Endothelial cell of umbilical vein (primary cell): ENCODE measurements at regions of chr7 and their contacts with region 1.

Region 1: DNA sequence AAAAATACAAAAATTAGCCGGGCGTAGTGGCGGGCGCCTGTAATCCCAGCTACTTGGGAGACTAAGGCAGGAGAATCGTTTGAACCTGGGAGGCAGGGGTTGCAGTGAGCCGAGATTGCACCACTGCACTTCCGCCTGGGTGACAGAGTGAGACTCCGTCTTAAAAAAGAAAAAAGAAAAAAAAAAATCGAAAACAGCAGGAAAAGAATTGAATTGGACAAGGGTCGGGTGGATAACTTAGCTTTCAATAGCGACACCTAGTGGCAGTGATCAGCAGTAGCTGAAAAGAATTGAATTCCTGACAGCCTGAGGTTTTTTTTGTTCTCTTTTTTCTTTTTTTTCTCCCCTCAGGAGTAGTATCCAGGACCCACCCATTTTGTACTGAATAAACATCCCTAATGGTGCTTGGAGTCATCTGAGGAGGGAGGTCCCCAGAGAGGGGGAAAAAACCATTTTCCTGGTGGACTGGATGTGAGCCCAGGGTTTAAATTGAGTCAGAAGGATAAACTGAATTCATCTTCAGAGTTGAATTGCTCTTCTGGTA is 55.1 kb downstream of the CYCS start:
- DNase-seq: peak; percentile 70
- H3K4me3 ChIP-seq: no peak overlapping the region
- H3K27ac ChIP-seq: no peak overlapping the region
- H3K4me1 ChIP-seq: no peaks in the 10 kb centered on the region
- H3K27me3 ChIP-seq: peaks cover 0 to 2% of the 10 kb centered on the region in 2 experiments
- CTCF ChIP-seq: peak; percentile 65 to 73
- POLR2A ChIP-seq: no peak

Region 2: GRCh38 chr7:24896031-24896501 is 173.9 kb before region 1 on chr7:
- CTCF ChIA-PET with region 1: interaction called, 5 read pairs
- POLR2A ChIA-PET with region 1: no interaction called
- dilution Hi-C with region 1: no loop called
- intact Hi-C with region 1: loop called (anchors 1 kb)
- DNase-seq: no peak
- H3K4me3 ChIP-seq: no peak overlapping the region
- H3K27ac ChIP-seq: no peak overlapping the region
- H3K4me1 ChIP-seq: peaks cover 13% of the 10 kb centered on the region
- H3K27me3 ChIP-seq: no peaks in the 10 kb centered on the region
- CTCF ChIP-seq: no peak
- POLR2A ChIP-seq: no peak

Region 3: DNA sequence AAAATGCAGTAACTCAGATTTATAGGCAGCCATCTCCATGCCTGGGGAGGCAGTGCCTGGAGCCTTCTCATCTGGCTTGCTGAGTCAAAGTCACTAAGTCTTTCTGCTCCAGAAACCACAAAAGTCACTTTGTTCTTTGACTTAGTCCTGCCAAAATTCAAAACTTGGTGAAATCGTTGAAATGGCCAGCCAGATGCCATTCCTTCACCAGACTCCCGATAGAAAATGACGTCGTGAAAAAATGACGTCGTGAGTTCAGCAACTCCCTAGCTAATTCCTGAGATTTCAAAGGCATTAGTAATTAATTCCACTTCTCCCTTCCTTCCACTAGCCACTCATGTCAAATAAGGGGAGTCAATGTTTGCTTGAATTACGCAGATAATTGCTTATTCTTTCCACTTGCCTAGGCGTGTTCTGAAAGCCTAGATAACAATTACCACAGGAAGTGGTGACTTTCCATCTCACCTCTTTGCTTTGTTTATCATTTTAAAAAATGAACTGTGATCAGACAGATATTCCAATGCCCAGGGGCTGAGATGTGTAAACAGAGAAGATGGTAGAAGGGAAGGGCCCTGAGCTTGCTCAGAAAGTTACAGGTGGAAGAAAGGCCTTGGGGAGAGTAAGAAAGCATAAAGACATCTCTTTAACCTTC is 41.5 kb before region 1 on chr7:
- CTCF ChIA-PET with region 1: interaction called, 6 read pairs
- POLR2A ChIA-PET with region 1: no interaction called
- dilution Hi-C with region 1: no loop called
- intact Hi-C with region 1: loop called (anchors 1 kb)
- DNase-seq: peak; percentile 78
- H3K4me3 ChIP-seq: no peak overlapping the region
- H3K27ac ChIP-seq: peak overlapping the region; percentile 95
- H3K4me1 ChIP-seq: peaks cover 38% of the 10 kb centered on the region
- H3K27me3 ChIP-seq: no peaks in the 10 kb centered on the region
- CTCF ChIP-seq: no peak
- POLR2A ChIP-seq: no peak